HepG2 (cell line): ENCODE measurements at regions of chr12 and their contacts with region 1.

Region 1: DNA sequence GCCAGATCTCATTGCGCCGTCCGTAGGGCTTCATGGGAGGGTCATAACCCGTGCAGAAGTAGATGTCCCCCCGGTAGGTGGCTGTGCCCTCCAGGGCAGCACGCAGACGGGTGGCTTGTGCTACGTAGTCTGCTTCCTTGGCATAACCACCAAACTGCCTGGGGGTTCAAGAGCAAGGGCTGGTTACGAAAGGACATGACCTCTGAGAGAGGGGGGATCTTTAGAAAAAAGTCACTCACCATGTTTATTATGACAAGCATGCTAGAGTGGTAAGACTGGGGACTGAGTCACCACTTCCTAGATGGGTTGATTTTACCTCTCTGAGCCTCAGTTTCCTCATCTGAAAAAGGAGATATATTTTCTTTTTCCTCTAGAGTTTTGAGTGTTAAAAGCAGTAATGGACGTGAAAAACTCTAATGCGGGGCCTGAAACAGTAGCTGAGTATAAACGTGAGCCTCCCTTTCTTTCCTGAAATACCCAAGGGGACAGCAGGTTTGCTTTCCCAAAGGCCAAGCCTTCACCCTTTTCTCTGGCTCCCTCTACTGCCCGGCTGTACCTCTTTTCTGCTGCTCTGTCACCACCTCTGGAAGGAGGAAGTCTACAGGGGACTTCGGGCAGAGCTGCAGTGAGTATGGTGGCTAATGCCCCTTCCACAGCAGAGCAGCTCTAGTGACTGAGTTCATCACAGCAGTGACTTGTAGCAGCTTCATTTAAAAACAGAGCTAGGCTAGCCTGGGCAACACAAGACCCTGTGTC is 23.5 kb upstream of the GPRC5D start:
- DNase-seq: peak; percentile 41
- ATAC-seq: peak; percentile 90
- H3K4me3 ChIP-seq: no peak overlapping the region
- H3K27ac ChIP-seq: no peak overlapping the region
- H3K4me1 ChIP-seq: no peaks in the 10 kb centered on the region
- H3K27me3 ChIP-seq: no peaks in the 10 kb centered on the region
- CTCF ChIP-seq: peak; percentile 75
- EP300 ChIP-seq: no peak
- POLR2A ChIP-seq: no peak
- RAD21 ChIP-seq: peak; percentile 25; the same call in 1 of the 2 replicates

Region 2: DNA sequence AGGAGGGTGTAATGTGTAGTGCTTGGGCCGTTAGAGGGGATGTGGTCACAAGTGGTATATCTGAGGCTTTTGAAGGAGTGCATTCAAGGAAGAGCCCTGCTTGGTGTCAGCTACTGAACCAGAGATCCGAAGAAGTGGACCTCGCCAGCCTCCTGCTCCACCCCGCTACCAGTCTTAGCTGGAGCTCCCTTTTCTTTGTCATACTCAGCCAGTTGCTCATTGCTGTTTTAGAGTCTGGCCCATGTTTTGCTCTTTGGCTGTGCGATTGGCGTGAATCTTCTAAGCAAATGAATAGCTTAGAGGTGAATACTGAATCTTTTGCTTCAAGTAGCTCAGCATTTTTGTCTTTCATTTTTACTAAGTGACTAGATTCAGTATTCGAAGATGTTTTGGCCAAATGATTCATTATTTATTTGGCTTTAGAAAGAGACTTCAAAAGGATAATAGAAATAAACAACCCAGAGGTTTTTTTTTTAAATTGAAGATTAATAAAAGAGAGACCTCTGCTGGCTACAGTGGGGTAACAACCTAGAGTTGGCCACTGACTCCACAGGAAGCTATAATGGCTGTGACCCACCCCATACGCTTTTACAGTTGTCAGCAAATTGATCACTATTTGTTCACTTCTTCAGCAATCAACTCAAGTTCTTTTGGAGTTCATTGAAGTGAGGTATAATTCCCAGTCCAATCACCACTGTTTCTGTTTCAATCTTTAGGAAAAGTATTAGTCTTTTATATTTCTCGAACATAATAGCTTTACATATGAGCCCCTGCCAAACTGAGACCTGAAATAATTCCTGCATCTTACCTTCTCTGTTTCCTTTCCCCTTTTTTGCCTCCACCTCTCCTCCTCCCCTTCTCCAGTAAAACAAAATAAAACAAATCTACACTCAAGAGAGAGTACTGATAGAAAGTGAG is 238.5 kb before region 1 on chr12:
- CTCF ChIA-PET with region 1: no interaction called
- POLR2A ChIA-PET with region 1: no interaction called
- in situ Hi-C with region 1: no loop called
- intact Hi-C with region 1: no loop called
- DNase-seq: no peak
- ATAC-seq: peak; percentile 83
- H3K4me3 ChIP-seq: no peak overlapping the region
- H3K27ac ChIP-seq: no peak overlapping the region
- H3K4me1 ChIP-seq: peaks cover 33% of the 10 kb centered on the region
- H3K27me3 ChIP-seq: no peaks in the 10 kb centered on the region
- CTCF ChIP-seq: peak; percentile 42; the same call in 1 of the 2 replicates
- EP300 ChIP-seq: no peak
- POLR2A ChIP-seq: no peak
- RAD21 ChIP-seq: no peak

Region 3: DNA sequence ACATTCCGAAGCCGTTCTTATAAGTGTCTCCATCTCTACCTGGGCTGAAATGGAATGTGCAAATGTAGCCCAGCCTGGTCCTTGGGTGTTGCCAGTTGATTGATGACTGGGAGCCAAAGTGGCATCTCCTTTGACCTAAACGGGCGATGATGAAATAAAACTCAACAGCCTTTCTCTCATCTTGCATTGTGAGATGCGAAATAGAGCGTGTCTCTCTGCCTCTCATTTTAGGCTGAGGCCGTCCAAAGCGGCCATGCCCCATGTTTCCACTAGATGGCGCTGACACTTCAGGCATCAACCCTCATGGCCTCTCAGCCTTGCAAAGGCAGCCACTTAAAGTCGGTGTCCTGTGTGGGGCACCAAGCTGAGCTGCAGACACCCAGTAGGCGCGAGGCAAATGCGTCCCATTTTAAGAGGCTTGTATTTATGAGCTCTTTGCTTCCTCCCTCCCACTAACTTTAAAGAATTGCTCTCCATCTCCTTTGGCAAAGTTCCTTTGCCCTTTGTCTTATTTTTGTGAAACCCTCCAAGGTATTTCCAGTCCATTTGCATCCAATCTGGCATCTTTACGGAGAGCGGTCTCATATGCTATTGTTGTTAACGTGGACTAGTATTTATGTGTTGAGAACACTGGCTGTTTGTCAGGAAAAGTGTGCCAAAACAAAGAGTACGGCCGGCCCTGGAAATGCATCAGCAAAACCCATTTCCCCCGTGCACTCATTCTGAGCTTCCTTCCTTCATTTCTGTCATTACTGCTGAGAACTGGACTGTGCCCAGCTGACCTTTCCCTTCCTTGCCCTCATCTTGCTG is 59.2 kb before region 1 on chr12:
- CTCF ChIA-PET with region 1: interaction called, 16 read pairs
- POLR2A ChIA-PET with region 1: no interaction called
- in situ Hi-C with region 1: loop called (anchors 5 kb)
- intact Hi-C with region 1: loop called (anchors 1 kb)
- DNase-seq: peak; percentile 71
- ATAC-seq: peak; percentile 98
- H3K4me3 ChIP-seq: peak overlapping the region in 1 of 3 experiments; percentile 8; a peak in 1 of 6 replicates
- H3K27ac ChIP-seq: no peak overlapping the region
- H3K4me1 ChIP-seq: peaks cover 18% of the 10 kb centered on the region
- H3K27me3 ChIP-seq: peaks cover 4 to 16% of the 10 kb centered on the region in 2 experiments
- CTCF ChIP-seq: peak; percentile 98
- EP300 ChIP-seq: no peak
- POLR2A ChIP-seq: no peak
- RAD21 ChIP-seq: peak; percentile 92